ENCODE measurements at regions of chr20 and their contacts with region 1.

Region 1: DNA sequence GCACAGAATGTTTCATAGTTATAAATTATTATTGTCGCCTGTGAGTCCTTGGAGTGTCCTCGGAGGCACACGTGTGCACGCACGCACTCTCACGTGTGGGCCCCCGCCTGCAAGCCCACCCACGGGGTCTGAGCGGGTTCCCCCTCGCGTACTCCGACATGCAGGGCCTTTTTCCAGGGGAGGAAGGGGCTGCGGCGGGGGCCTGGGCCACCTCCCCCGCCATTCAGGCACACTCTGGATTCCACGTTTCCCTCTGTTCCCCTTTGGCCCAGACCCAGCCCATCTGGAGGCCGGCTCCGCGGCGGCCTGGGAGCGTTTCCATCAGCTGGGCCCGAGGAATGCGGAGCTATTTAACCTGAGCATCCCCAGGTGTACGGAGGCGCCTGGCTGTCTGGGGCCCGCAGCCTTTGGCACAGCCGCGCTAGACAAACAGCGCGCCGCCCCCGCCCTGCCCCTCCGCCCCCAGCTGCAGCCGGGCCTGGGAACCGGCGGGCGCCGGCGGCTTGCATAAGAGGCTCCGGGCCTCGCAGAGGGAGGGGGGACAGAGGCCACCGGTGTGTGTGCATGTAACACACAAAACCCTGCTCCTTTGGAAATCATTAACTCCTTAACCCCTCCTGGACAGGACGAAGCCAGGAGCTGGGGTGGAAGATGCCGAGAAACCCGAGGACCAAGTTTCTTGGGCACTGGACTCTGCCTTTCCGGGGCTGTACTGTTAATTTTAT is 3.3 kb downstream of the ID1 start:
- DNase-seq: peak in 38 of 42 donors; percentile 22 to 71 (median 44)

Region 2: GRCh38 chr20:31494131-31494530 is 114.3 kb before region 1 on chr20:
- intact Hi-C with region 1: no loop called
- DNase-seq: no peak

Region 3: DNA sequence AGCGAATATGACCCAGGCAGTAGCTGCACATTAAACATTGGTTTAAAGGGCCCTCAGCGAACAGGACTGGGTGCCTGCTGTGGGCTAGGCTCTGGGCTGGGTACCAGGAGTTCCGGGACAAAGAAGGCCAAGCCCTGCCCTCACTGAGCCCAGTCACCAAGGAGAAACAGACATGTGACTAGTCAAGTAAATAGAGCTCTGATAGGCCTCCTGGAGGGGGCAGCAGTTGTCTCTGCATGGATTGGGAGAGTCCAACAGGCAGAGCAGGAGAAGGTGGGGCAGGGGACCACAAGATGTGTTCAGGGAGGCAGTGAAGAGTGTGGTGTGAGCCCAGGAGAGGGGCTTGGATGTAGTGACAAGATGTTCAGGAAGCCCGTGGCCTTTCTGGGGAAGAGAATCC is 91.0 kb before region 1 on chr20:
- intact Hi-C with region 1: no loop called
- DNase-seq: peak in 7 of 42 donors; percentile 7 to 30 (median 14)

Region 4: GRCh38 chr20:31560094-31560899 is 48.1 kb before region 1 on chr20:
- intact Hi-C with region 1: loop called (anchors 2 kb)
- DNase-seq: peak; percentile 24 to 86 (median 70)

Region 5: DNA sequence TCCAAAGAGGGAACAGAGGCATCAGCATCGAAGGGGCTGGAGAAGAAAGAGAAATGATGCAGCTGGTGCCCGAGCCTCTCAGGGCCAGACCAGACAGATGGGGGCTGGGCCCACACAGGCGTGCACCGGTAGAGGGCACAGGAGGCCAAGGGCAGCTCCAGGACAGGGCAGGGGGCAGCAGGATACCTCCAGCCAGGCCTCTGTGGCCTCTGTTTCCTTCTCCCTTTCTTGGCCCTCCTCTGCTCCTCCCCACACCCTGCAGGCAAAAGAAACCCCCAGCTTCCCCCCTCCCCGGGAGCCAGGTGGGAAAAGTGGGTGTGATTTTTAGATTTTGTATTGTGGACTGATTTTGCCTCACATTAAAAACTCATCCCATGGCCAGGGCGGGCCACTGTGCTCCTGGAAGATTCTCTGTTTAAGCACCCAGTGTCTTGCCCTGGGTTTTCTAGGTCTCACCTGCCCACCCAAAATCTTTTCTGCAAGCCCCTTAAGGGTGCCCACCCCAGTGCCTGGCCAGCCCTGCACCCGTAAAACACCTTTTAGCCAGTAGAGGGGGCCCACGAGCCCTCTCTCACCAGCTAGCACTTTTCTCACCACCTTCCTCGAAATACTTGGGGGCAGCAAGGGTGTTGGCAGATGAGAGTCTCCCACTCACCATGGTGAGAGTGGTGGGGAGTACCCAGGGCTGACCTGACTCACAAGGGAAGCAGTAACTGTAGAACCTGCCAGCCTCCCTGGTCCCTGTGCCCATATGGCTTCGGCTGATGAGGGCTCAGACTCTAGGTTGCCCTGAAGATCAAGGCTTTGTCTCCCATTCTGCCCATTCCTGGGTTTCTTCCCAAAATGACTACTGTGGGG is 39.0 kb before region 1 on chr20:
- intact Hi-C with region 1: loop called (anchors 2 kb)
- DNase-seq: peak; percentile 41 to 88 (median 68)

Measured in head of caudate nucleus (tissue), 42 donors.